ENCODE measurements at regions of chr2 and their contacts with region 1.

Region 1: DNA sequence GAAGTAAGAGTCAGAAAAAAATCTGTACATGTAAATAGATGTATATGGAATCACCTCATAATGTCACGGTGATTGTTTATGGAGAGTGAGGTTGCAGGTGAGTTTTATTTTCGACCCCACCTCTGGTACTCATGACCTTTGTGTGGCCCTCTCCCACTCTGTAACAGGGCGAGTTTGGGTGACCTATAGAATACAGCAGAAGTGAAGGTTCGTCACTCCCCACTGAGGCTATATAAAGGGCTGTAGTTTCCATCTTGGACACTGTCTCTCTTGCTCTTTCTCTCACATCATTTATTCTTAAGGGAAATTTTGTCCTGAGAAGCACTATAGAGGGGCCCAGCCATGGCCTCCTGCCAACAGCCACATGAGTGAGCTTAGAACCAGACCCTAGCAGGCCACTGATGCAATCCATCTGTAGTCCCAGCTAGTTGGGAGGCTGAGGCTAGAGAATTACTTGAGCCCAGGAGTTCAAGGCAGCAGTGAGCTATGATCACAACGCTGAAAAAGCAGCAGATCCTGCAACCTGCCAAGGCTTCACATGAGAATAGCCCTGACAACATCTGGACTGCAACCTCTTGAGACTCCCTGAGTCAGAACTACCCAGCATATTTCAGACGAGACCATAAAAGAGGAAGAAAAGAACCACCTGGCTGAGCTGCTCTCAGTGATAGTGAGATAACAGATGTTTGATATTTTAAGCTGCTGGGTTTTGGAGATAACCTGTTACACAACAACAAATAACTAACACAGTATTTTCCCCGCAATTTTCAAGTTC is 74.3 kb upstream of the SLC1A4 start:
- DNase-seq: peak; percentile 55
- H3K4me3 ChIP-seq: no peak overlapping the region
- H3K27ac ChIP-seq: no peak overlapping the region
- H3K27me3 ChIP-seq: peaks cover 25% of the 10 kb centered on the region
- CTCF ChIP-seq: no peak

Region 2: DNA sequence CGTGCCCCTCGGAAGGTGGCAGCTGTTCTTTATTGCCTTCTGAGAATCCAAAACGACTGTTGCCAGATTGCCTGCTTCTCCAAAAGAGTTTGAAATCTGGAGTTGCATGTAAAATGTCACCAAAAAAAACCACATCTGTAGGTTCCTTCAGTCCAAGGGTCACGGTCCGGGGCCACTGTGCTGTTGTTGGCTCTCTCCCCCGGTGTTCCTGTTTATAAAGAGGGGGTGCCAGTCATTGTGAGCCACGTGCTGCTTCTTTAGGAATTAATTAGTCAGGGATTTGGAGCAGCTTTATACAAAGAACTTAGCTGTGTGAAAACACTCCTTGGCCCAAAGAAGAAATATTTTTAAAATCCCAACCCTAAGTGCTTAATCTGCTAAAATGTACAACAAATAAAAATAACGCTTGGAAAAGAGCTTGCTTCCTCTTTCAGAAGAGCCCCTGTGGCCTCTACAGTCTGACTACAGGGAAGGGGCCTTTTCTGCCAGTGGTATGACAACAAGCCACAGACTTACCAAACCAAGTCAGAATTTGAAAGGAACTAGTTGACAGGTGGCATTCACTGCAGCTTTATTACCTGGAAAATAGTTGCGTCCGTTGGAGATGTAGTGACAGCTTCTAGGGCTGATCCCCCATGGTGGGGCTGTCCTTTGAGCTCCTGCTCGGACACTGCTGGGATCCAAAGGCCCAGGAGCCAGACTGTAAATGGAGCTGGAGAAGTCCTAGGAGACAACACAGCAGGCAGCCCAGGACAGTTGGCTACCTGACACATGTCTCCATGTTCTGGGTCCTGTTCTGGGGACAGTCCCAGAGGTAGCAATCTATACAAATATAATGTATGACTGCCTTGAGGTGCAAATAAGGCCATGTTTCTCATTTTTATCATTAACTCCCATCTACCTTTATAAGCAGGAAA is 10.3 kb before region 1 on chr2:
- CTCF ChIA-PET with region 1: interaction called, 36 read pairs
- POLR2A ChIA-PET with region 1: no interaction called
- DNase-seq: no peak
- H3K4me3 ChIP-seq: no peak overlapping the region
- H3K27ac ChIP-seq: no peak overlapping the region
- H3K27me3 ChIP-seq: peaks cover 44% of the 10 kb centered on the region
- CTCF ChIP-seq: no peak

Region 3: GRCh38 chr2:65024149-65024829 is 109.4 kb after region 1 on chr2:
- CTCF ChIA-PET with region 1: interaction called, 12 read pairs
- POLR2A ChIA-PET with region 1: no interaction called
- DNase-seq: peak; percentile 44
- H3K4me3 ChIP-seq: no peak overlapping the region
- H3K27ac ChIP-seq: peak overlapping the region; percentile 59
- H3K27me3 ChIP-seq: no peaks in the 10 kb centered on the region
- CTCF ChIP-seq: no peak

Region 4: DNA sequence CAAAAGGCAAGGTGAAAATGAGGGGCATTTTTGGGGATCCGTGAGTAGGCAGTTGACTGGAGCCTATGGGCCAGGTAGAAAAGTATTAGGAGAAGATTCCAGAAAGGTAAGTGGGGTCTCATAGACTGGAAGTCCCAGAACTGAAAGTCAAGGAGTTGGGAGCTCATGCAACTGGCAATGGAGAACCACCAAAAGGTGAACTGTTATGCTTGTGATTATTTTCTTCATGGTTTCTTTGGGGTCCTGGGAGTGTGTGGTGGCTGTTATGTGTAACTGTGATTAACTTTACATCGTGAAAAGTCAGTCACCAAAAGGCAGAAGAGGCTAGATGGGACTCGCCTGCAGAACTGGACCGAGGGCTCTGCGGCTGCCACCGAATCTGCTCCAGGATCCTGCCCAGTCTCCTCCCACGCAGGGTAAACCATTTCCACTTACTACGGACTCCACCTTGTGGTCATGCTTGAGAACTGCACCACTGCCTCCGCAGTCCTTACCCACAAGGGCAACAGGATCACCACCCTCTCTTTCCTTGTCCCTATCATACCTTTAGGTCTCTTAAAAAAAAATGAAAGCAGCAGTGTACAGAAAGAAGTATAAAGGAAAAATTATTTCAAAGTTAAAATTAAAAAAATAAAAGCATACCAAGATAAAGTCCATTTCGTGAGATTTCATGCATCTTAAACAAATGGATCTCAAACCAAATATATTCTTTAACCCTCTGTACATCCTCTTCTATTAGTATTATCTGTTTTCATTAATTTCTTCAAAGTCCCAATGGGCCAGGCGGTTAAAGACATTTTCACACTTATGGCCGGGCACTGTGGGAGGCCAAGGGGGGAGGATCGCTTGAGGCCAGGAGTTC is 125.7 kb after region 1 on chr2:
- CTCF ChIA-PET with region 1: interaction called, 85 read pairs
- POLR2A ChIA-PET with region 1: interaction called, 3 read pairs
- DNase-seq: peak; percentile 62
- H3K4me3 ChIP-seq: peak overlapping the region; percentile 27; the same call in 1 of the 2 replicates
- H3K27ac ChIP-seq: no peak overlapping the region
- H3K27me3 ChIP-seq: peaks cover 5% of the 10 kb centered on the region
- CTCF ChIP-seq: peak; percentile 95

Region 5: GRCh38 chr2:65064728-65065552 is 150.0 kb after region 1 on chr2:
- CTCF ChIA-PET with region 1: interaction called, 10 read pairs
- POLR2A ChIA-PET with region 1: no interaction called
- DNase-seq: peak; percentile 79
- H3K4me3 ChIP-seq: no peak overlapping the region
- H3K27ac ChIP-seq: peak overlapping the region; percentile 77
- H3K27me3 ChIP-seq: no peaks in the 10 kb centered on the region
- CTCF ChIP-seq: peak; percentile 62

Region 6: GRCh38 chr2:65177751-65178442 is 263.0 kb after region 1 on chr2:
- CTCF ChIA-PET with region 1: no interaction called
- POLR2A ChIA-PET with region 1: no interaction called
- DNase-seq: no peak
- H3K4me3 ChIP-seq: no peak overlapping the region
- H3K27ac ChIP-seq: no peak overlapping the region
- H3K27me3 ChIP-seq: peaks cover 2% of the 10 kb centered on the region
- CTCF ChIP-seq: no peak

Measured in AG04450 (cell line).